ENCODE measurements at regions of chr12 and their contacts with region 1.

Region 1: GRCh38 chr12:56636675-56637540 is 6.8 kb upstream of the BAZ2A start:
- DNase-seq: peak; percentile 100
- H3K4me3 ChIP-seq: peak overlapping the region; percentile 79
- H3K27ac ChIP-seq: peak overlapping the region; percentile 99
- H3K4me1 ChIP-seq: peaks cover 17% of the 10 kb centered on the region
- H3K27me3 ChIP-seq: no peaks in the 10 kb centered on the region
- CTCF ChIP-seq: peak; percentile 43

Region 2: GRCh38 chr12:56448860-56449621 is 187.9 kb before region 1 on chr12 and contains the start of gene TIMELESS:
- intact Hi-C with region 1: no loop called
- DNase-seq: peak; percentile 93
- H3K4me3 ChIP-seq: peak within 1 kb of the TSS; percentile 58
- H3K27ac ChIP-seq: peak within 1 kb of the TSS; percentile 73
- H3K4me1 ChIP-seq: no peaks in the 10 kb centered on the region
- H3K27me3 ChIP-seq: no peaks in the 10 kb centered on the region
- CTCF ChIP-seq: no peak
- total RNA-seq, gene TIMELESS: 9.1 to 36.4 TPM

Region 3: DNA sequence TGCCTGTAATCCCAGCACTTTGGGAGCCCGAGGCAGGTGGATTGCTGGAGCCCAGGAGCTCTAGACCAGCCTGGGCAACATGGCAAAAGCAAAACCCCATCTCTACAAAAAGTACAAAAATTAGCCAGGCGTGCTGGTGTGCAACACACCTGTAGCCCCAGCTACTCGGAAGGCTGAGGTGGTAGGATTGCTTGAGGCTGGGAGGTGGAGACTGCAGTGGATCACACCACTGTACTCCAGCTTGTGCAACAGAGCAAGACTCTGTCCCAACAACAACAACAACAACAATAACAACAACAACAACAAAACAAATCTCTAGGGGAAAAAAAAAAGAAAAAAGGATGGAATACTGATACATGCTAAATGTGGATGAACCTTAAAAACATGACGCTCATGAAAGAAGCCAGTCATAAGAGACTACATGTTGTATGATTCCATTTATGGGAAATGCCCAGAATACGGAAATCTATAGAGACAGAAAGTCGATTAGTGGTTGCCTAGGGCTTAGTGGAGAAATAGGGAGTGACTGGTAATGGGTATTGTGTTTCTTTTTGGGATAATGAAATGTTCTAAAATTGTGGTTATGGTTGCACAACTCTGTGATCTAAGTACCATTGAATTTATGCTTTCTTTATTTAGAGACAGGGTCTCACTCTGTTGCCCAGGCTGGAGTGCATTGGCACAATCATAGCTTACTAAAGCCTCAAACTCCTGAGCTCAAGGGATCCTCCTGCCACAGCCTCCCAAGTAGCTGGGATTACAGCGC is 107.4 kb before region 1 on chr12:
- intact Hi-C with region 1: no loop called
- DNase-seq: no peak
- H3K4me3 ChIP-seq: no peak overlapping the region
- H3K27ac ChIP-seq: no peak overlapping the region
- H3K4me1 ChIP-seq: peaks cover 4% of the 10 kb centered on the region
- H3K27me3 ChIP-seq: no peaks in the 10 kb centered on the region
- CTCF ChIP-seq: no peak

Region 4: GRCh38 chr12:56688129-56688845 is 51.4 kb after region 1 on chr12 and contains the start of gene PTGES3:
- intact Hi-C with region 1: loop called (anchors 5 kb)
- DNase-seq: peak; percentile 97
- H3K4me3 ChIP-seq: peak within 1 kb of the TSS; percentile 87
- H3K27ac ChIP-seq: peak within 1 kb of the TSS; percentile 100
- H3K4me1 ChIP-seq: peaks cover under 1% of the 10 kb centered on the region
- H3K27me3 ChIP-seq: no peaks in the 10 kb centered on the region
- CTCF ChIP-seq: no peak
- total RNA-seq, gene PTGES3: 242 to 303 TPM

Measured in colonic mucosa (tissue), 4 donors.